BJ (cell line): ENCODE measurements at regions of chr6 and their contacts with region 1.

Region 1: GRCh38 chr6:111057074-111057752 is 30.1 kb upstream of the SLC16A10 start:
- DNase-seq: no peak
- H3K4me3 ChIP-seq: no peak overlapping the region
- H3K27me3 ChIP-seq: no peaks in the 10 kb centered on the region; the same call in 1 of the 2 replicates
- CTCF ChIP-seq: peak; percentile 80

Region 2: DNA sequence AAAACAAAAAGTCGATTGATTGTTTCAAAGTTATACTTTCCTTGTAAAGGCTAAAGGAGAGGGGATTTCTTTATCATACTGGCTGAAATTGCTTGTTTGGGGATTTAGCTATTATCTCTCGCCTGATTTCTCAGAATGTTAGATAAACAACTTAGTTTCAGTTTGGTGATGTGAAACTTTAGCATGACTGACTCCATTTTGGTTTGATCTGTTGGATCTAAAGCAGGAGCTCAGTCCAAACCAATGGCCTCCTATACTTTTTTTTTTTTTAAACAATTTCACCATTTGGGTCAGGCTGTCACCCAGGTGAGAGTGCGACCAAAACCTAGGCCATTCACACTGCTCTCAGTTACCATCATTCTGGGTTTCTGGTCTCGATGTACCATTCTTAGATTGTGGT is 15.3 kb before region 1 on chr6:
- CTCF ChIA-PET with region 1: interaction called, 15 read pairs
- POLR2A ChIA-PET with region 1: no interaction called
- DNase-seq: no peak
- H3K4me3 ChIP-seq: no peak overlapping the region
- H3K27me3 ChIP-seq: no peaks in the 10 kb centered on the region
- CTCF ChIP-seq: no peak